ENCODE measurements at regions of chr19 and their contacts with region 1.

Region 1: DNA sequence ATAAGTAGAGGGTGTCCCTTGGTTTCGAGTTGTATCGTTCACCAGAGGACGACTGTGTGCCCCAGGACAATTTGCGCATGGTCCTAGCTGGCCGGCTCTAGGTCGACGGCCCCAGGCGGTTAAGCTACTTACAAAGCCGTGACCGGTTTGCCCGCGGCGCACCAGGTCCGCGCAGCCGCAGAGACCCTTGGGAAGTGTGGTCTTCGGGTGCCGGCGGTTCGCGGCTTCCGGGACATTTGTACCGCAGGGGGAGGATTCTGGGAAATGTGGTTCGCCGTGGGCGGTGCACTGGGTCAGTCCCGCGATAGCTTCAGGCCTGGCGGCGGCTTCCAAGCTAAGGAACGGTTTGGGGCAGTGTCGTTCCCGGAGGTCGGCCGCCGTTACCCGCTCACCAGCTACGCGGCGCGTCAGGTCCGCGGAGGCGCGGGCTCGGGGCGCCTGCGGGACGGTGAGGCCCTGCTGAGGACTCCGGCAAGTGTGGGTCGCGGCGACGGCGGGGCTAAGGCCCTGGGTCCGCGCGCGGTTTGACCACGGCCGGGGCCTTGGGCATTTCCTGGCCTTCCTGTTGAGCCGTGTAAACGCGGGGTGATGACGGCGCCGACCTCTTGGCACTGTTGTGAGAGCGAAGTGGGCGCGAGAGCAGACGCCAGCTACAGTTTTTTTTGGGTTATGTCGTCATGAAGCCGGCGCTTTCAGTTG is at the start of gene ZNF302:
- DNase-seq: peak; percentile 97
- ATAC-seq: peak; percentile 89
- H3K4me3 ChIP-seq: peak within 1 kb of the TSS; percentile 83 to 95 (median 91)
- H3K4me3 Mint-ChIP-seq: peak within 1 kb of the TSS; percentile 98
- H3K27ac ChIP-seq: peak within 1 kb of the TSS; percentile 87 to 90
- H3K27ac Mint-ChIP-seq: peak within 1 kb of the TSS; percentile 98
- H3K4me1 ChIP-seq: peaks cover 13 to 17% of the 10 kb centered on the region in 2 donors
- H3K4me1 Mint-ChIP-seq: peaks cover 25% of the 10 kb centered on the region
- H3K27me3 ChIP-seq: peaks cover 0 to 16% (median 0%) of the 10 kb centered on the region in 4 experiments
- H3K27me3 Mint-ChIP-seq: peaks cover 14% of the 10 kb centered on the region
- CTCF ChIP-seq: no peak
- total RNA-seq, gene ZNF302: 48.4 and 51.6 TPM in 2 replicates

Region 2: DNA sequence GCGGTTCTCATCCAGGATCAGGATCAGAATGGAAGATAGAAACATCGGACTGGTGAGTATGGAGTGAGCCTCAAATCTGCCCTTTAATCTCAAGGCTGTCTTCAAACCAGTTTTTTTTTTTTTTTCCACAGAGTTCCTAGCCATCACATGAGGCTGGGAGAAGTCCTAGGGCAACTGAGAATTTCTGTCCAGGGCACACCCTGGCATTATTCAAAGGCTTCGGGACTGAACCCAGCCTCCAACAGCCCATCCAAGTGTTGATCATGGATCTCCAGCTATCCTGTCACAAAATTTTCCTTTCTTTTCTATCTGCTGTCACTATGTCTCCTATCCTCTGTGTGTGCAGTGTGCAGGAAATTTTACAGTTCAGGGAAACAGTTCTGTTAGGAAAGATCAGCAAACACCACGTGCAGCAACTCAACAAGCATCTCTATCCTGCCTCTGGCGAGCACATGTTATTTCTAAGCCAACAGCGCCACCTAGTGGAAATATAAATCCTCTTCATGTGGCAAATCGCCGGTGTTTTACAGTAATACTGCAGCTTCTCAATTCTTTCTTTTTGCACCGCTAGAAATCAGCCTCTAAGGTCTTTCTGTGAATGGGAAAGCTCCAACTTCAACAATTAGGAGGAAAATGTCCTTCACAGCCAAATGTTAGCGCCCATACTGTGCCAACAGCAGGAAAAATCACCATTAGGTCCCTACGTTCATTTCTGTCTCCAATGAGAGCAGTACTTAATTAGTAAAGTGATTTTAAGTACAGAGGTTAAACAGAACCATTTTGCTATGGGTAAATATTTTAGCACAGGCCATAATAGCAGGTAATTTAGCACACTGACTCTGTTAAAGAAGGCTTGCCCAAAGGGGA is 35.1 kb after region 1 on chr19:
- CTCF ChIA-PET with region 1: interaction called, 7 read pairs
- POLR2A ChIA-PET with region 1: no interaction called
- intact Hi-C with region 1: loop called (anchors 2 kb)
- DNase-seq: peak; percentile 83
- ATAC-seq: peak; percentile 56
- H3K4me3 ChIP-seq: no peak overlapping the region
- H3K4me3 Mint-ChIP-seq: no peak overlapping the region
- H3K27ac ChIP-seq: no peak overlapping the region
- H3K27ac Mint-ChIP-seq: no peak overlapping the region
- H3K4me1 ChIP-seq: no peaks in the 10 kb centered on the region
- H3K4me1 Mint-ChIP-seq: no peaks in the 10 kb centered on the region
- H3K27me3 ChIP-seq: peaks cover 0 to 12% (median 2%) of the 10 kb centered on the region in 4 experiments
- H3K27me3 Mint-ChIP-seq: peaks cover 30% of the 10 kb centered on the region
- CTCF ChIP-seq: peak; percentile 80

Region 3: GRCh38 chr19:34725400-34725799 is 47.9 kb after region 1 on chr19:
- CTCF ChIA-PET with region 1: no interaction called
- POLR2A ChIA-PET with region 1: no interaction called
- intact Hi-C with region 1: no loop called
- DNase-seq: no peak
- ATAC-seq: no peak
- H3K4me3 ChIP-seq: no peak overlapping the region
- H3K4me3 Mint-ChIP-seq: no peak overlapping the region
- H3K27ac ChIP-seq: no peak overlapping the region
- H3K27ac Mint-ChIP-seq: no peak overlapping the region
- H3K4me1 ChIP-seq: no peaks in the 10 kb centered on the region
- H3K4me1 Mint-ChIP-seq: no peaks in the 10 kb centered on the region
- H3K27me3 ChIP-seq: peaks cover 0 to 12% (median 3%) of the 10 kb centered on the region in 4 experiments
- H3K27me3 Mint-ChIP-seq: peaks cover 34% of the 10 kb centered on the region
- CTCF ChIP-seq: no peak

Measured in B cell (primary cell).